HCT116 (cell line): ENCODE measurements at regions of chr6 and their contacts with region 1.

Region 1: GRCh38 chr6:126657561-126658175 is 317.8 kb downstream of the CENPW start:
- DNase-seq: peak; percentile 39
- ATAC-seq: peak; percentile 67; the same call in 1 of the 2 replicates
- H3K4me3 ChIP-seq: no peak overlapping the region
- H3K27ac ChIP-seq: no peak overlapping the region
- H3K4me1 ChIP-seq: no peaks in the 10 kb centered on the region
- H3K27me3 ChIP-seq: no peaks in the 10 kb centered on the region
- CTCF ChIP-seq: peak; percentile 64 to 71 (median 67)
- POLR2A ChIP-seq: no peak
- RAD21 ChIP-seq: peak; percentile 86

Region 2: DNA sequence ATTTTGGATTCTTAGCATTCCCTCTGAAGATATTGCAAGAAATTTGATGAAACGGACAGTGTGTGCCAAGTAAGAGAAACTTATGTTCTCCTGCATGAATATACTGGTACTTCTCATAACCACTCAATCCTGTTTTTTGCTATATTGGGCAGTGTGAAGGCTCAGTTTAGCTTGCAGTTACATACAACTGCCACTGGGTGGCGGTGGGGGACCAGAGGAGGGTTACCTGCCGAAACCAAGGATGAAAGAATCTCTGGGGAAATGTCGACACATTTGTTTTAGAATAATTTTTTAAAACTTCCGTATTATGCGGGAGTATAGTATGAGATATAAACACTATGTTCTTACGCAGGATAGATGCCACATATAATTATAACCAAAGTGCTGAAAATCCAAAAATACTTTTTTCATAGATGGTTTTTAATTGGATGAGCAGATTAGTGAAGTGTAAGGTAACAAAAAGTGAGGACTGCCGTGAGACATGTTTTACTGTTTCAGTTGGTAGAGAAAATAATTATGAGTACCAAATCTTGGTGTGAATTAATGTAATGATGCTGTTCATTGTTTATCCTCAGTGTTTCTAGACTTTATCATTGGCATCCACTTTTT is 661.6 kb before region 1 on chr6:
- CTCF ChIA-PET with region 1: interaction called, 10 read pairs
- POLR2A ChIA-PET with region 1: no interaction called
- RAD21 ChIA-PET with region 1: no interaction called
- intact Hi-C with region 1: loop called (anchors 5 kb)
- DNase-seq: peak; percentile 41
- ATAC-seq: peak; percentile 98
- H3K4me3 ChIP-seq: no peak overlapping the region
- H3K27ac ChIP-seq: no peak overlapping the region
- H3K4me1 ChIP-seq: peaks cover 0 to 3% of the 10 kb centered on the region in 2 experiments; a peak in 1 of 4 replicates
- H3K27me3 ChIP-seq: no peaks in the 10 kb centered on the region
- CTCF ChIP-seq: peak; percentile 67 to 97 (median 95)
- POLR2A ChIP-seq: no peak
- RAD21 ChIP-seq: peak; percentile 83

Region 3: DNA sequence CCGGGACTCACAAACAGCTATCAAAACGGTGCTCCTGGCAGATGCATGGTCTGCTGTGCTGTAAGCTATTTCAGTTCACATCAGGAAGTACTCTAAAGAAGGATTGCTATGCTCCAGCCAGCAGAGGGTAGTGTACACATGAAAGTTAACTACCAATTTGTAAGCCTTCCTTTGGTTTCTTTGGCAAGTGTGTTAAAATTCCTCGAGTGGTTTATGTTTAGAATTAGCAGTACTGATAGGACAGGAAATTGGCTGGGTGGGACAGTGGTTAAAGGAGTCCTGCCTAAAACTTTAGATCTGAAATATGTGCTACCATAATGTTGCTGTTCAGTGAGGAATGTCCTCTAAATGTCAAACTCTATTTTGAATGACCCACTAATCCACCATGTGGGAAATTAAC is 624.0 kb before region 1 on chr6:
- CTCF ChIA-PET with region 1: no interaction called
- POLR2A ChIA-PET with region 1: no interaction called
- RAD21 ChIA-PET with region 1: no interaction called
- intact Hi-C with region 1: loop called (anchors 1 kb)
- DNase-seq: no peak
- ATAC-seq: peak; percentile 83
- H3K4me3 ChIP-seq: no peak overlapping the region
- H3K27ac ChIP-seq: no peak overlapping the region
- H3K4me1 ChIP-seq: no peaks in the 10 kb centered on the region
- H3K27me3 ChIP-seq: no peaks in the 10 kb centered on the region
- CTCF ChIP-seq: peak; percentile 22 to 50 (median 41); a peak in 5 of 6 replicates
- POLR2A ChIP-seq: no peak
- RAD21 ChIP-seq: peak; percentile 55

Region 4: DNA sequence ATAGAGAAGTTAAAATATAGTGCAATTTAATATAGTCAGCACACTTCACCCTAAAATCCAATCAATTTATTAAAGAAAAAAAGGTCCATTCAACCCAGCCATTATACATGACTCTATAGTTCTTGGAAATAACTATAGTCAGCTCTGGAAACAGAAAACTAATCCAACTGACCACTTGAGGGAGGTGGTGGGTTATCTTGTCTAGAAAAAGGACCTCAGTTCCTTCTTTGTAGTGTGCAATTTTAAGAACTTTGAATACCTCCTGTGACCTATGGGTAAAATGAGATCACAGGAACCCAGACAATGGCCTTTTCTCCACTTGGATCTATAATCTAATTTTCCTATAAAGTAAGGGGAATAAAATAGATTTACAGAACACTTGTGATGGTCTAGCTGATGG is 481.4 kb before region 1 on chr6:
- CTCF ChIA-PET with region 1: interaction called, 7 read pairs
- POLR2A ChIA-PET with region 1: no interaction called
- RAD21 ChIA-PET with region 1: no interaction called
- intact Hi-C with region 1: loop called (anchors 5 kb)
- DNase-seq: no peak
- ATAC-seq: peak; percentile 54; the same call in 1 of the 2 replicates
- H3K4me3 ChIP-seq: no peak overlapping the region
- H3K27ac ChIP-seq: no peak overlapping the region
- H3K4me1 ChIP-seq: peaks cover 5 to 12% of the 10 kb centered on the region in 2 experiments; a peak in 3 of 4 replicates
- H3K27me3 ChIP-seq: no peaks in the 10 kb centered on the region
- CTCF ChIP-seq: peak; percentile 23 to 51 (median 29); a peak in 5 of 6 replicates
- POLR2A ChIP-seq: no peak
- RAD21 ChIP-seq: peak; percentile 63

Region 5: DNA sequence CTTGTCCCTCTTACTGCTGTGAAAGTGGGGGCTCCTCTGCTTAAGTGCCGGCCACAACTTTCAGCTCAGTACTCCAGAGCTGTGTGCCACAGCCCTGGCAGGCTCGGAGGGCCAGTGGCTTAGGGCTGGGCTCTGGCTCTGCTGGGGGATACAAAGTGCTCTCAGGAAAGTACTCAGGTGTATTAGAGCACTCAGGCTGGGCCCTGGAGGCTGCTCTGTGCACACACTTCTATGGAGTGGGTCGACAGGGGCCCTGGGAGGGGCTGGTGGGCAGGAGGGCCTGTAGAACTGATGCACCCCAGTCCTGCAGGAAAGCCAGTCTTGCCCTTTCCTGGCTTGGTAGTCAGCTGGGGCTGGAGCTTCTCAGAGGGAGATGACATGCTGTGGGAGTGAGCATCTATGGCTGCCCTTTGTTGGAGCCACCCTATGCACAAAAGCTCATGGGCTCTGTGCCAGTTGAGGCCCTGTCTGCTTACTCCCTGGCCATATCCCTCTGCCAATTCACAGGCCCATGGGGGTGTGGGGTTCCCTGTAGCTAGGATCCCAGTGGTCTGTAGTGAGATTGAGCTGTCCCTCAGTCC is 295.7 kb before region 1 on chr6:
- CTCF ChIA-PET with region 1: interaction called, 8 read pairs
- POLR2A ChIA-PET with region 1: no interaction called
- RAD21 ChIA-PET with region 1: no interaction called
- intact Hi-C with region 1: loop called (anchors 1 kb)
- DNase-seq: no peak
- ATAC-seq: no peak
- H3K4me3 ChIP-seq: no peak overlapping the region
- H3K27ac ChIP-seq: no peak overlapping the region
- H3K4me1 ChIP-seq: no peaks in the 10 kb centered on the region
- H3K27me3 ChIP-seq: no peaks in the 10 kb centered on the region
- CTCF ChIP-seq: no peak
- POLR2A ChIP-seq: no peak
- RAD21 ChIP-seq: no peak

Region 6: DNA sequence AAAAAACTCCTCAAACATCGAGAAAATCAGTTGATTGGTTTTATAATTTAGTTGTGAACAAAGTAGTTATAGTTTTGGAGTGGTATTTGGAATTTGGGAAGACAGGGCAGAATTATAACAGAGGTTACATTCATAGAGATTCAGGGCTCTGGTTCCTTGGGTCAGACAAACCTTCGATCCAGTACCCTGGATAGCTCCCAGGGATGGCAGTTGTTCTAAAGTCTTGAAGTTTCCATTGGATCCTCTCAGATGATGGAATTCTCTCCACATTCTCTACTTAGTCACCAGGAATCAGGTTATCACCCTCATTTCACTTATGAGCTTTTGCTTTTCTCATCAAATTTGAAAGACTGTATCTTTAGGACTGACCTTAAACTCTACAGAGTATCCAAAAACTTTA is 32.6 kb before region 1 on chr6:
- CTCF ChIA-PET with region 1: no interaction called
- POLR2A ChIA-PET with region 1: no interaction called
- RAD21 ChIA-PET with region 1: no interaction called
- intact Hi-C with region 1: no loop called
- DNase-seq: no peak
- ATAC-seq: no peak
- H3K4me3 ChIP-seq: no peak overlapping the region
- H3K27ac ChIP-seq: no peak overlapping the region
- H3K4me1 ChIP-seq: no peaks in the 10 kb centered on the region
- H3K27me3 ChIP-seq: no peaks in the 10 kb centered on the region
- CTCF ChIP-seq: no peak
- POLR2A ChIP-seq: no peak
- RAD21 ChIP-seq: no peak

Region 7: GRCh38 chr6:126753606-126754005 is 95.9 kb after region 1 on chr6:
- CTCF ChIA-PET with region 1: no interaction called
- POLR2A ChIA-PET with region 1: no interaction called
- RAD21 ChIA-PET with region 1: no interaction called
- intact Hi-C with region 1: no loop called
- DNase-seq: no peak
- ATAC-seq: no peak
- H3K4me3 ChIP-seq: no peak overlapping the region
- H3K27ac ChIP-seq: no peak overlapping the region
- H3K4me1 ChIP-seq: no peaks in the 10 kb centered on the region
- H3K27me3 ChIP-seq: no peaks in the 10 kb centered on the region
- CTCF ChIP-seq: no peak
- POLR2A ChIP-seq: no peak
- RAD21 ChIP-seq: no peak